CD8-positive, alpha-beta T cell (primary cell): ENCODE measurements at regions of chr3 and their contacts with region 1.

Region 1: GRCh38 chr3:75906555-75907112 is 121.3 kb upstream of the ZNF717 start:
- DNase-seq: no peak
- ATAC-seq: no peak
- H3K4me3 ChIP-seq: no peak overlapping the region
- H3K4me3 Mint-ChIP-seq: no peak overlapping the region
- H3K27ac ChIP-seq: no peak overlapping the region
- H3K27ac Mint-ChIP-seq: no peak overlapping the region
- H3K4me1 ChIP-seq: no peaks in the 10 kb centered on the region
- H3K4me1 Mint-ChIP-seq: no peaks in the 10 kb centered on the region
- H3K27me3 ChIP-seq: no peaks in the 10 kb centered on the region
- H3K27me3 Mint-ChIP-seq: peaks cover 5% of the 10 kb centered on the region
- CTCF ChIP-seq: no peak

Region 2: DNA sequence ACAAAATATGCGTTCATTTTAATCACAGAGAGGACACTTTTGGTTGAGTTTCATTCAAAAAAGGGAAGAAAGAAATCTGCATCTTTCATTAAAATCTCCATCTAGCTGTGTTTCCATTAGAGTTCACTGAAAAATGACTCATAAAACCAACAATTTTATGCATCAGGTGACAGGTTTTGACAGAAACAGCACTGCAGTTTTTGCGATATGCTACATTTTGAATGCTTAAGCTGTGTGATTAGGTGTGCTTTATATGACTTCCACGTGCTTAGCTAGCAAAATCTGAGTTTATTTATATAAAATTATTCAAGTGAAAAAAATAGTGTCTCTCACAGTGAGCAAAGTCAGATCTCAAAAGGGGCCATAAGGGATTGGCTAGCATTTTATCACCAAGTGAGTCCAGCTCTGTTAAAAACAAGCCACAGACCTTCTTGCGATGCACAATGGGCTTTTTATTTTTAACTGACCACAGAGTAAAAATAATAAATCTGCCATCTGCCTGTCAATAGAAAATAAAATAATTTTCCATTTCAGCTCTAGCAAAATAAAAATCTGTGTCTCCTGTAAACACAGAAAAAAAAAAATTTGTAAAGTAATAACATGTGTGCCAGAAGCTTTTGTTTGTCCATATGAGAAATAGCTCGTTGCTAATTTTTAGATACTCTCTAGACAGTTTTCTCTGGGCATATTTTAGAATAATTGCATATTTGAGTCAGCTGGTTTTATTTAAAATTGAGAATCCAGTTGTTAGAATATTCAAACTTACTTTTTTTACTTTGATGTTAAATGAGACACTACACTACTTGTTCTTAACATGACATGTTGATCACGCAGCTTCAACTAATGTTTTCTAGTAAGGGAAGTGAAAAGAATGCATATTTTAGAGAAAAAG is 1543.1 kb after region 1 on chr3:
- CTCF ChIA-PET with region 1: no interaction called
- POLR2A ChIA-PET with region 1: no interaction called
- intact Hi-C with region 1: loop called in 1 of 2 experiments (anchors 10 kb)
- DNase-seq: no peak
- ATAC-seq: no peak
- H3K4me3 ChIP-seq: no peak overlapping the region
- H3K4me3 Mint-ChIP-seq: no peak overlapping the region
- H3K27ac ChIP-seq: no peak overlapping the region
- H3K27ac Mint-ChIP-seq: no peak overlapping the region
- H3K4me1 ChIP-seq: no peaks in the 10 kb centered on the region
- H3K4me1 Mint-ChIP-seq: no peaks in the 10 kb centered on the region
- H3K27me3 ChIP-seq: no peaks in the 10 kb centered on the region
- H3K27me3 Mint-ChIP-seq: no peaks in the 10 kb centered on the region
- CTCF ChIP-seq: no peak